Activated CD4-positive, alpha-beta T cell treated with anti-CD3 and anti-CD28 coated beads for 36 hours (primary cell): ENCODE measurements at regions of chr1 and their contacts with region 1.

Region 1: GRCh38 chr1:243343970-243344937 is 88.4 kb downstream of the SDCCAG8 start:
- DNase-seq: no peak
- ATAC-seq: no peak
- H3K4me3 Mint-ChIP-seq: no peak overlapping the region
- H3K27ac Mint-ChIP-seq: no peak overlapping the region
- H3K4me1 Mint-ChIP-seq: peaks cover 6% of the 10 kb centered on the region
- H3K27me3 Mint-ChIP-seq: no peaks in the 10 kb centered on the region

Region 2: DNA sequence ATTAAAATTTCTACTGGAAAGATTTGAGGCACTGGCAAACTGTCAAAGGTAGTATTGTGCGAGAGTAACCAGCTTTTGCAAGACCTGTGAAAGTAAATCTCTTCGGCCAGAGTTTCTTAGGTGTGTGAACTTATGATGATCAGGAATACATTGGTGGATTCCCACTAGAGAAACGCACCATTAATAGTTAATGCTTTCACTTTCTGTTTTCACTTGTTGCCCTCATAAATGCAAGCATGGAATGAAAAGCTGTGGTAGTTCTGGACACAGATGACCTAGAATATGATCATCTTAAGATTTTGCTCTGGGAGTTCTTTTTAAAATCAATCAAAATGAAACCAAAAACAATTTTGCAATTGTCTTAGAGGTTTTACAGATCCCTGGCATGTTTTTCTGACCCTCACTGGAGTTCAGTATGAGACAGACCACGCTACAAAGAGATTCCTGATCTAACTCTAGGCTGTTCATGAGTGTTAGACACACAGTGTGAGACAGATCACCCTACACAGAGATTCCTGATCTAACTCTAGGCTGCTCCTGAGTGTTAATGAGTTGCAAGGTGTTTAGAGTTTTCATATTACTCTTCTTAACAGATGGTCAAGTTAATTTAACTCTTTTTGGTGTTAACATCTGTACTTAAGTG is 10.4 kb after region 1 on chr1:
- CTCF ChIA-PET with region 1: interaction called, 11 read pairs
- POLR2A ChIA-PET with region 1: no interaction called
- intact Hi-C with region 1: no loop called
- DNase-seq: no peak
- ATAC-seq: peak; percentile 58
- H3K4me3 Mint-ChIP-seq: no peak overlapping the region
- H3K27ac Mint-ChIP-seq: no peak overlapping the region
- H3K4me1 Mint-ChIP-seq: peaks cover 12% of the 10 kb centered on the region
- H3K27me3 Mint-ChIP-seq: no peaks in the 10 kb centered on the region

Region 3: DNA sequence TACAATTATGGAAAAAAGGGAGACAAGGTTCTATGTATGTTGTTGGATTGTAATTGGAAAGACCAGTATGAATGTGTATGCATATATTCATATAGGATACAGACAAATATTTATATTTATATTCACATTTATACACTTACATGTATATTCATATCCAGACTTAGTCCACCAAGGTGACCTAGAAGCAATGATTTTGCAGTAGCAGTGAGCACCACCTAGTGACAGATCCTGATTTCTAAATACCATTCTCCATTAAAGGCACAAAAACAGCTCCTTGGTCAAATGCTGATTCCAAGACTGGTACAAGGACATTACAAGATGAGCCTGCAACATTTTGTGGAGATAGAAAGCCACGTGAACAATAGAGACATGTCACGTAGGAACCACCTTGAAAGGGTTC is 65.0 kb after region 1 on chr1:
- CTCF ChIA-PET with region 1: interaction called, 3 read pairs
- POLR2A ChIA-PET with region 1: no interaction called
- intact Hi-C with region 1: loop called (anchors 1 to 2 kb)
- DNase-seq: no peak
- ATAC-seq: no peak
- H3K4me3 Mint-ChIP-seq: no peak overlapping the region
- H3K27ac Mint-ChIP-seq: no peak overlapping the region
- H3K4me1 Mint-ChIP-seq: peaks cover 24% of the 10 kb centered on the region
- H3K27me3 Mint-ChIP-seq: no peaks in the 10 kb centered on the region

Region 4: GRCh38 chr1:243421784-243422183 is 77.5 kb after region 1 on chr1:
- CTCF ChIA-PET with region 1: no interaction called
- POLR2A ChIA-PET with region 1: no interaction called
- intact Hi-C with region 1: no loop called
- DNase-seq: peak; percentile 78
- ATAC-seq: peak; percentile 99
- H3K4me3 Mint-ChIP-seq: peak overlapping the region; percentile 34
- H3K27ac Mint-ChIP-seq: peak overlapping the region; percentile 38
- H3K4me1 Mint-ChIP-seq: peaks cover 26% of the 10 kb centered on the region
- H3K27me3 Mint-ChIP-seq: no peaks in the 10 kb centered on the region

Region 5: DNA sequence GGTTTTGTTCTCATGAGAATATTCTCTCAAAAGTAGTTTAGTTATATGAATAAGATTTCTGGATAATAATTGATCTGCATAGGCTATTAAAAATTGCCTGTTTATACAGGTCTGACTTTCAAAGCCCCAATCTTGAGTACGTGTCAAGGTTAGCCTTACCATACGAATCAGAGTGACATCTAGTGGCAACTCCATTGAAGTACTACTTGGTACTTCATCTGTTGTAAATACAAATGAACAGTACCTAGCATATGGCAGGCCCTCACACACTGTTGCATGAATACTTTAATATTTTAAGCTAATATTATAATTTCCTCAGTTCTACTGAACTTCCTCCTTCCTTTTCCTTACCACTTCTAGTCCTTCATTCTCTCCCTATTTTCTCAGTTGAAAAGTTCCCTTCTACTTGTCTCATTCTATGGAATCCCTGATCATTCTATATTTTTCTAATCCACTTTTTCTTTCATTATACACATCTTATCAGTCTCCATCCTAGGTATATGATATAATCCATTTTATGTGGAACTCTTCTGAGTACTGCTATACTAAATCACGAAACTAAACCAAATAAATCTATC is 404.5 kb after region 1 on chr1:
- CTCF ChIA-PET with region 1: interaction called, 4 read pairs
- POLR2A ChIA-PET with region 1: no interaction called
- intact Hi-C with region 1: loop called (anchors 1 kb)
- DNase-seq: no peak
- ATAC-seq: peak; percentile 98
- H3K4me3 Mint-ChIP-seq: no peak overlapping the region
- H3K27ac Mint-ChIP-seq: no peak overlapping the region
- H3K4me1 Mint-ChIP-seq: peaks cover 28% of the 10 kb centered on the region
- H3K27me3 Mint-ChIP-seq: no peaks in the 10 kb centered on the region

Region 6: GRCh38 chr1:243946946-243947345 is 602.7 kb after region 1 on chr1:
- CTCF ChIA-PET with region 1: interaction called, 6 read pairs
- POLR2A ChIA-PET with region 1: no interaction called
- intact Hi-C with region 1: loop called (anchors 1 to 2 kb)
- DNase-seq: peak; percentile 65
- ATAC-seq: peak; percentile 74
- H3K4me3 Mint-ChIP-seq: no peak overlapping the region
- H3K27ac Mint-ChIP-seq: no peak overlapping the region
- H3K4me1 Mint-ChIP-seq: peaks cover under 1% of the 10 kb centered on the region
- H3K27me3 Mint-ChIP-seq: peaks cover under 1% of the 10 kb centered on the region